Endothelial cell of umbilical vein (primary cell): ENCODE measurements at regions of chr5 and their contacts with region 1.

Region 1: GRCh38 chr5:98768160-98769005 is 5.1 kb upstream of the RGMB start:
- DNase-seq: peak; percentile 78
- H3K4me3 ChIP-seq: peak overlapping the region; percentile 70 to 96 (median 90)
- H3K27ac ChIP-seq: peak overlapping the region; percentile 25
- H3K4me1 ChIP-seq: peaks cover 20% of the 10 kb centered on the region
- H3K27me3 ChIP-seq: no peaks in the 10 kb centered on the region
- CTCF ChIP-seq: peak; percentile 84 to 90
- POLR2A ChIP-seq: no peak

Region 2: GRCh38 chr5:97528941-97529340 is 1239.4 kb before region 1 on chr5:
- CTCF ChIA-PET with region 1: interaction called, 45 read pairs
- POLR2A ChIA-PET with region 1: no interaction called
- dilution Hi-C with region 1: no loop called
- intact Hi-C with region 1: loop called (anchors 2 kb)
- DNase-seq: peak; percentile 64
- H3K4me3 ChIP-seq: no peak overlapping the region
- H3K27ac ChIP-seq: peak overlapping the region; percentile 17
- H3K4me1 ChIP-seq: peaks cover 7% of the 10 kb centered on the region
- H3K27me3 ChIP-seq: no peaks in the 10 kb centered on the region
- CTCF ChIP-seq: no peak
- POLR2A ChIP-seq: no peak

Region 3: DNA sequence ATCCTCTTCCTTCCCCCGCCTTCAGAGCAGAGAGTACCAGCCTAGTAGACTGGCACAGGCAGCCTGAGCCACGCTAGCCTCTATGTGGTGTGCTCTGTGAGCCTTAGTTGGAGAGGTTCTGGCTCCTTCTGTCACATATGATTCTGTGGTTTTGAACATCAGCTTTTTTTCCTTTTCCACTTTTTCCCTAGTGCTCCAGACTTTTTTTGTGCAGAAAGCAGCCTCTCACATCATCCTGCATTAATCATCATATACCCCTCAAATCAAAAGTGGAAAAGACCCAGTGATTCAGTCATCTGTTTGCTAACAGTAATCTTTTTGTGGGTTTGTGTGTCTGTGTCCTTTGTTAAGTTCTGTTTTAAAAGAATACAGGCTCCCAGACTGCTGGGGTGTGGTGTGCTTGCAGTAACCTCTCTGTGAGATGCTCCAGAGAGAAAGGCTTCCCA is 658.8 kb before region 1 on chr5:
- CTCF ChIA-PET with region 1: interaction called, 13 read pairs
- POLR2A ChIA-PET with region 1: no interaction called
- dilution Hi-C with region 1: no loop called
- intact Hi-C with region 1: loop called (anchors 5 kb)
- DNase-seq: peak; percentile 47
- H3K4me3 ChIP-seq: no peak overlapping the region
- H3K27ac ChIP-seq: peak overlapping the region; percentile 97
- H3K4me1 ChIP-seq: peaks cover 40% of the 10 kb centered on the region
- H3K27me3 ChIP-seq: no peaks in the 10 kb centered on the region
- CTCF ChIP-seq: no peak
- POLR2A ChIP-seq: no peak

Region 4: GRCh38 chr5:98454904-98455303 is 313.5 kb before region 1 on chr5:
- CTCF ChIA-PET with region 1: interaction called, 49 read pairs
- POLR2A ChIA-PET with region 1: no interaction called
- dilution Hi-C with region 1: no loop called
- intact Hi-C with region 1: loop called (anchors 1 kb)
- DNase-seq: peak; percentile 80
- H3K4me3 ChIP-seq: peak overlapping the region in 1 of 3 experiments; percentile 53
- H3K27ac ChIP-seq: peak overlapping the region; percentile 72
- H3K4me1 ChIP-seq: peaks cover 19% of the 10 kb centered on the region
- H3K27me3 ChIP-seq: no peaks in the 10 kb centered on the region
- CTCF ChIP-seq: peak in 1 of 2 donors; percentile 4
- POLR2A ChIP-seq: no peak

Region 5: DNA sequence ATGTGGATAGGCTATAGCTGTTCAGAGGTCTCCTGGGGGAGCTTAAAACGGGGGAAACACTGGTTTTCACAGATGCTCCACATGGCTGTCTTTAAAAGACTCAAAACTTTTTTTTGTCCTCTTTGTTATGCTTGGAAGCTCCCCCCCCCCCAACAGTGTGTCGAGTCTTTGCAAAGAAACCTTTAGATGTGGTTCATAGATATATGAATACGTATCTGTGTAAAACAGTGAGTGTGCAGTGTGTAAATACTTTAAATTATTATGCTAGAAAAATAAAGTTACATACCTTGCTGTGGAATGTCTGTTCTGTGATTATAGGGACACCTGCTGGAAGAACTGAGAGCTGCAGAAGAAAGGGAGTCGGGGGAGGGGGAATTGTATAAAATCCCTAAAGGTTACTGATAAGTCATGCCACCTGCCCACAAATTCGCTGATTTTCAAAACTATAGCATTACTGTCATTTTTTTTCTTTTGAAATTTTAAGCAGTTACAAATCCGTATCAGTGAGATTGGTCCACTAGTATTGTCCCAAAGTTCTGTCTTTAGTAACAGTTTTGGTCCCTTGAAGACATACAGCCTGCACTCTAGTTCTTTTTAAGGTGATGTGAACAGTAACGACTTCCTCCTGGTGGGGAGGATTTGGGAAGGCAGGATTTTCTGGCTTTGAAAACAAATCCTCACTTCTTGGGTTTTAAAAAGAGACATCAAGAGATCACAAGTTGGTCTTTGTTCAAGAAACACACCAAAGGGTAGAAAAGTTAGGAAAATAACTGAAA is 28.0 kb after region 1 on chr5:
- CTCF ChIA-PET with region 1: interaction called, 94 read pairs
- POLR2A ChIA-PET with region 1: interaction called, 5 read pairs
- dilution Hi-C with region 1: no loop called
- intact Hi-C with region 1: loop called (anchors 1 kb)
- DNase-seq: peak; percentile 74
- H3K4me3 ChIP-seq: no peak overlapping the region
- H3K27ac ChIP-seq: peak overlapping the region; percentile 43
- H3K4me1 ChIP-seq: no peaks in the 10 kb centered on the region
- H3K27me3 ChIP-seq: no peaks in the 10 kb centered on the region
- CTCF ChIP-seq: peak; percentile 68 to 70
- POLR2A ChIP-seq: no peak